ENCODE measurements at regions of chr16 and their contacts with region 1.

Region 1: GRCh38 chr16:57167953-57168352 is 17.9 kb downstream of the PSME3IP1 start:
- DNase-seq: no peak
- H3K4me3 ChIP-seq: no peak overlapping the region
- H3K27ac ChIP-seq: peak overlapping the region in 1 of 4 donors; percentile 14
- H3K4me1 ChIP-seq: peaks cover 0 to 10% (median 0%) of the 10 kb centered on the region in 4 donors
- H3K27me3 ChIP-seq: no peaks in the 10 kb centered on the region
- CTCF ChIP-seq: peak; percentile 42 to 62 (median 54)
- EP300 ChIP-seq: no peak
- POLR2A ChIP-seq: no peak

Region 2: GRCh38 chr16:56964243-56965148 is 203.5 kb before region 1 on chr16:
- in situ Hi-C with region 1: loop called in 3 of 4 experiments (anchors 10 to 25 kb)
- intact Hi-C with region 1: no loop called
- DNase-seq: peak; percentile 96
- H3K4me3 ChIP-seq: no peak overlapping the region
- H3K27ac ChIP-seq: peak overlapping the region in 1 of 4 donors; percentile 40
- H3K4me1 ChIP-seq: peaks cover 0 to 19% (median 7%) of the 10 kb centered on the region in 4 donors
- H3K27me3 ChIP-seq: no peaks in the 10 kb centered on the region
- CTCF ChIP-seq: peak; percentile 85 to 99 (median 97)
- EP300 ChIP-seq: no peak
- POLR2A ChIP-seq: no peak

Region 3: DNA sequence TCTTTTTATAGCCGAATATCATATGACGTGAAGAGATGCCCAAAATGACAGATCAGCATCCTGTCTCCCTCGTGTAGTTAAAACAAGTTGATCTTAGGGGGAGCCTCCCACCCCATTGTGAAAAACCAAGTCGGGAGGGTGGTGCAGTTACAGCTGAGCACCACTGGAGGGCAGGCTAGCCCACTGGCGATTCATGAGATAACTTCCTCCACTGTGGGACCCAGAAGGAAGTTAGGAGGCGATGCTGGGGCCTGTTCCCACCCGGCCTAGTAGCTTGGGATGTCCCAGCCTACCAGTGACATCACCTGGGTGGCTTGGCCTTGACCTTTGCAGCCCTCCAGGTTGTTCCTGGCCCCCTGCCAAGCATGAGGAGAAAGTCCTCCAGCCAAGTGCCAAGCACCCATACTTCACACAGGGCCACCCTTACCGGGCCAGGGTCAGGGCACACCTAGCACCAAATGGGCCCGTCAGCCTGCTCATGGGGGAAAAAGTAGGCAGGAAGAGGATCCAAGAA is 83.6 kb before region 1 on chr16:
- in situ Hi-C with region 1: loop called (anchors 5 to 10 kb)
- intact Hi-C with region 1: loop called (anchors 2 kb)
- DNase-seq: peak; percentile 72
- H3K4me3 ChIP-seq: no peak overlapping the region
- H3K27ac ChIP-seq: peak overlapping the region in 2 of 4 donors; percentile 0 to 28
- H3K4me1 ChIP-seq: peaks cover 0 to 7% (median 3%) of the 10 kb centered on the region in 4 donors
- H3K27me3 ChIP-seq: no peaks in the 10 kb centered on the region
- CTCF ChIP-seq: peak; percentile 97 to 99 (median 99)
- EP300 ChIP-seq: no peak
- POLR2A ChIP-seq: no peak

Region 4: GRCh38 chr16:57089406-57089805 is 78.5 kb before region 1 on chr16:
- in situ Hi-C with region 1: loop called (anchors 5 to 10 kb)
- intact Hi-C with region 1: loop called (anchors 2 kb)
- DNase-seq: no peak
- H3K4me3 ChIP-seq: no peak overlapping the region
- H3K27ac ChIP-seq: no peak overlapping the region
- H3K4me1 ChIP-seq: peaks cover 6 to 36% (median 28%) of the 10 kb centered on the region in 4 donors
- H3K27me3 ChIP-seq: no peaks in the 10 kb centered on the region
- CTCF ChIP-seq: no peak
- EP300 ChIP-seq: no peak
- POLR2A ChIP-seq: no peak